CD8-positive, alpha-beta memory T cell (primary cell): ENCODE measurements at regions of chr1 and their contacts with region 1.

Region 1: GRCh38 chr1:21368515-21369289 is 71.2 kb upstream of the NBPF3 start:
- DNase-seq: peak; percentile 47 to 74 (median 57)
- H3K4me3 ChIP-seq: no peak overlapping the region
- H3K4me3 Mint-ChIP-seq: peak overlapping the region in 2 of 7 donors; percentile 51 to 58
- H3K27ac ChIP-seq: no peak overlapping the region
- H3K27ac Mint-ChIP-seq: peak overlapping the region in 2 of 8 donors; percentile 43 to 58
- H3K4me1 ChIP-seq: peaks cover 8% of the 10 kb centered on the region
- H3K4me1 Mint-ChIP-seq: peaks cover 5 to 9% (median 5%) of the 10 kb centered on the region in 3 donors
- H3K27me3 ChIP-seq: no peaks in the 10 kb centered on the region
- H3K27me3 Mint-ChIP-seq: peaks cover 0 to 5% of the 10 kb centered on the region in 2 donors

Region 2: DNA sequence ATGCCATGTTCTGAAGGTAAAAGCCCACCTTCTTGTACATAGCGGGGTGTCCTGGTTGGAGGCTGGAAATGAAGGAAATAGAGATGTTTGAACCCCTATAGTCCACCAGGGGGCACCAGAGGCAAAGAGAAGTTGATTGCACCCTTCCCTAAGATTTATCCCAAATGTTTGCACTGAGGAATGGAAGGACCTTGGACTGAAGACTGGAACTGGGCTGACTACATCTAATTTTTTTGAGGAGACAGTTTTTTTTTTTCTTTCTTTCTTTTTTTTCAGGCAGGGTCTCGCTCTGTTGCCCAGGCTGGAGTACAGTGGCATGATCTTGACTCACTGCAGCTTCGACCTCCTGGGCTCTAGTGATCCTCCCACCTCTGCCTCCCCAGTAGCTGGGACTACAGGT is 136.7 kb before region 1 on chr1:
- CTCF ChIA-PET with region 1: interaction called, 136 read pairs
- POLR2A ChIA-PET with region 1: no interaction called
- DNase-seq: peak in 3 of 5 donors; percentile 9 to 37 (median 22)
- H3K4me3 ChIP-seq: no peak overlapping the region
- H3K4me3 Mint-ChIP-seq: no peak overlapping the region
- H3K27ac ChIP-seq: no peak overlapping the region
- H3K27ac Mint-ChIP-seq: peak overlapping the region in 1 of 8 donors; percentile 31
- H3K4me1 ChIP-seq: no peaks in the 10 kb centered on the region
- H3K4me1 Mint-ChIP-seq: no peaks in the 10 kb centered on the region
- H3K27me3 ChIP-seq: no peaks in the 10 kb centered on the region
- H3K27me3 Mint-ChIP-seq: no peaks in the 10 kb centered on the region

Region 3: DNA sequence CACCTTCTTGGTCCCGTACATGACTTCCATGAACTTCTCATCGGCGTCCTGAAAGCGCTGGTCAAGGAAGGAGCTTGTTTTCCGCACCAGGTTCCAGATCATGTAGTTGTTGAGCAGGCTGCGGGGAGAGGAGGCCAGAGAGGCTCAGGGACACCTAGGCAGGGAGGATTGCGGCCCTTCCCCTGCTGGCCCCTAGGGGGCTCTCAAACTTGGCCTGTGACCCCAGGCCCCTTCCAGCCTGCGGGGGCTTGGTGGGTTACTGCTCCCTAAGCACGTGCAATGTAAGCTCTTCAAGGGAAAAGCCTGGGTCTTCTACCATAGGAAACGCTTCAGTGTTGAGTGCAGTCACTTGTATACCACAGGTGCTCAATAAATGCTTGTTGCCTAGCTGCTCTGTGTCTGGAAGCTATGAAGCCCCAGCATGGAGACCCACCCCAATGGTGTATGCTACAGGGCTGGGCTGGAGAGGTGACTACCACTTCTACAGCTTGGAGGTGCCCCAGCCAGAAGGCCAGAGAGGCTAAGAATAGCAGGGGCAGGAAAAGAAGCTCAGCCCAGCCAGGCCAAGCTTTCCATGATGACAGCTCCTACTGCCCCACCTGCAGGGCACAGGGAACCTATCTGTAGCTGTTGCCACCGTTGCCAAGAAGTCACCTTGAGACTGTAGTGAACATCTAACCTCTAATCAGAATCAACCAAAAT is 123.6 kb before region 1 on chr1:
- CTCF ChIA-PET with region 1: interaction called, 27 read pairs
- POLR2A ChIA-PET with region 1: no interaction called
- DNase-seq: no peak
- H3K4me3 ChIP-seq: no peak overlapping the region
- H3K4me3 Mint-ChIP-seq: no peak overlapping the region
- H3K27ac ChIP-seq: no peak overlapping the region
- H3K27ac Mint-ChIP-seq: peak overlapping the region in 1 of 8 donors; percentile 52
- H3K4me1 ChIP-seq: no peaks in the 10 kb centered on the region
- H3K4me1 Mint-ChIP-seq: peaks cover 0 to 2% (median 0%) of the 10 kb centered on the region in 3 donors
- H3K27me3 ChIP-seq: no peaks in the 10 kb centered on the region
- H3K27me3 Mint-ChIP-seq: no peaks in the 10 kb centered on the region

Region 4: DNA sequence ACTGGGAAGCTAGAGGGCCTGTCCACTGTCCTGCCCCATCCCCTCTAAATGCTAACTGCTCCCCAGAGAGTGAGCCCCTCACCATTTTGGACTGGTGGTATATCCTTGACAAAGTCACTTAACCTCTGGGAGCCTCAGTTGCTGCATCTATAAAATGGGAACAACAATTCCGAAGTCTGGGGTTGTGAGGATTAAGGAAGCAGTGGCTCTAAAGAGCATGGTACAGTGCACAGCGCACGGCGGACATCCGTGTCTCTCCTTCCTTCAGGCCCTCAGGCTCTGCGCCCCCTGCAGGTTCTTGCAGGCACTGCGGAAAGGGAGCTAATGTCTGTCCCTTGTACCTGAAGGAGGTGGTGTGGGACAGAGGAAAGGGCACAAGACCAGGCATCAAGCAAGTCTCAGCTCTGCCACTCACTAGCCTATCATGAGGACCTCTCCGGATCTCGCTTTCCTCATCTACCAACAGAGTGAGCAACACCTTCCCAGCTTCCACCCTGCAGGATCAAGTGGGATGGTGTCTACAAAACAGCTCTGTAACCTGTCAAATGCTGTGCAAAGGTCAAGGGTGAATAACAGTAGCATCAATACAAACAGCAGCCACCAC is 98.5 kb before region 1 on chr1:
- CTCF ChIA-PET with region 1: interaction called, 76 read pairs
- POLR2A ChIA-PET with region 1: no interaction called
- DNase-seq: peak; percentile 65 to 84 (median 73)
- H3K4me3 ChIP-seq: no peak overlapping the region
- H3K4me3 Mint-ChIP-seq: peak overlapping the region in 1 of 7 donors; percentile 70
- H3K27ac ChIP-seq: no peak overlapping the region
- H3K27ac Mint-ChIP-seq: peak overlapping the region; percentile 19 to 94 (median 71)
- H3K4me1 ChIP-seq: peaks cover 19% of the 10 kb centered on the region
- H3K4me1 Mint-ChIP-seq: peaks cover 9 to 39% (median 31%) of the 10 kb centered on the region in 3 donors
- H3K27me3 ChIP-seq: no peaks in the 10 kb centered on the region
- H3K27me3 Mint-ChIP-seq: no peaks in the 10 kb centered on the region

Region 5: GRCh38 chr1:21355956-21356355 is 12.7 kb before region 1 on chr1:
- CTCF ChIA-PET with region 1: interaction called, 15 read pairs
- POLR2A ChIA-PET with region 1: no interaction called
- DNase-seq: no peak
- H3K4me3 ChIP-seq: no peak overlapping the region
- H3K4me3 Mint-ChIP-seq: no peak overlapping the region
- H3K27ac ChIP-seq: no peak overlapping the region
- H3K27ac Mint-ChIP-seq: no peak overlapping the region
- H3K4me1 ChIP-seq: no peaks in the 10 kb centered on the region
- H3K4me1 Mint-ChIP-seq: peaks cover 0 to 3% (median 0%) of the 10 kb centered on the region in 3 donors
- H3K27me3 ChIP-seq: no peaks in the 10 kb centered on the region
- H3K27me3 Mint-ChIP-seq: peaks cover 0 to 3% of the 10 kb centered on the region in 2 donors